Calu3 (cell line): ENCODE measurements at regions of chr11 and their contacts with region 1.

Region 1: GRCh38 chr11:14907411-14908213 is 15.6 kb upstream of the CYP2R1 start:
- DNase-seq: peak; percentile 82
- H3K4me3 Mint-ChIP-seq: peak overlapping the region; percentile 14
- H3K27ac Mint-ChIP-seq: peak overlapping the region; percentile 60
- H3K4me1 Mint-ChIP-seq: peaks cover 11% of the 10 kb centered on the region
- H3K27me3 Mint-ChIP-seq: no peaks in the 10 kb centered on the region
- CTCF ChIP-seq: peak; percentile 80

Region 2: GRCh38 chr11:14537134-14537599 is 370.4 kb before region 1 on chr11:
- CTCF ChIA-PET with region 1: interaction called, 3 read pairs
- intact Hi-C with region 1: loop called (anchors 5 kb)
- DNase-seq: peak; percentile 22
- H3K4me3 Mint-ChIP-seq: no peak overlapping the region
- H3K27ac Mint-ChIP-seq: no peak overlapping the region
- H3K4me1 Mint-ChIP-seq: no peaks in the 10 kb centered on the region
- H3K27me3 Mint-ChIP-seq: no peaks in the 10 kb centered on the region
- CTCF ChIP-seq: peak; percentile 72

Region 3: GRCh38 chr11:14789879-14790484 is 117.6 kb before region 1 on chr11:
- CTCF ChIA-PET with region 1: interaction called, 124 read pairs
- intact Hi-C with region 1: loop called (anchors 1 kb)
- DNase-seq: no peak
- H3K4me3 Mint-ChIP-seq: no peak overlapping the region
- H3K27ac Mint-ChIP-seq: no peak overlapping the region
- H3K4me1 Mint-ChIP-seq: no peaks in the 10 kb centered on the region
- H3K27me3 Mint-ChIP-seq: no peaks in the 10 kb centered on the region
- CTCF ChIP-seq: peak; percentile 37

Region 4: GRCh38 chr11:14974515-14975251 is 67.1 kb after region 1 on chr11:
- CTCF ChIA-PET with region 1: interaction called, 5 read pairs
- intact Hi-C with region 1: loop called (anchors 2 kb)
- DNase-seq: peak; percentile 68
- H3K4me3 Mint-ChIP-seq: peak overlapping the region; percentile 50
- H3K27ac Mint-ChIP-seq: no peak overlapping the region
- H3K4me1 Mint-ChIP-seq: peaks cover 10% of the 10 kb centered on the region
- H3K27me3 Mint-ChIP-seq: peaks cover 95% of the 10 kb centered on the region
- CTCF ChIP-seq: peak; percentile 63

Region 5: DNA sequence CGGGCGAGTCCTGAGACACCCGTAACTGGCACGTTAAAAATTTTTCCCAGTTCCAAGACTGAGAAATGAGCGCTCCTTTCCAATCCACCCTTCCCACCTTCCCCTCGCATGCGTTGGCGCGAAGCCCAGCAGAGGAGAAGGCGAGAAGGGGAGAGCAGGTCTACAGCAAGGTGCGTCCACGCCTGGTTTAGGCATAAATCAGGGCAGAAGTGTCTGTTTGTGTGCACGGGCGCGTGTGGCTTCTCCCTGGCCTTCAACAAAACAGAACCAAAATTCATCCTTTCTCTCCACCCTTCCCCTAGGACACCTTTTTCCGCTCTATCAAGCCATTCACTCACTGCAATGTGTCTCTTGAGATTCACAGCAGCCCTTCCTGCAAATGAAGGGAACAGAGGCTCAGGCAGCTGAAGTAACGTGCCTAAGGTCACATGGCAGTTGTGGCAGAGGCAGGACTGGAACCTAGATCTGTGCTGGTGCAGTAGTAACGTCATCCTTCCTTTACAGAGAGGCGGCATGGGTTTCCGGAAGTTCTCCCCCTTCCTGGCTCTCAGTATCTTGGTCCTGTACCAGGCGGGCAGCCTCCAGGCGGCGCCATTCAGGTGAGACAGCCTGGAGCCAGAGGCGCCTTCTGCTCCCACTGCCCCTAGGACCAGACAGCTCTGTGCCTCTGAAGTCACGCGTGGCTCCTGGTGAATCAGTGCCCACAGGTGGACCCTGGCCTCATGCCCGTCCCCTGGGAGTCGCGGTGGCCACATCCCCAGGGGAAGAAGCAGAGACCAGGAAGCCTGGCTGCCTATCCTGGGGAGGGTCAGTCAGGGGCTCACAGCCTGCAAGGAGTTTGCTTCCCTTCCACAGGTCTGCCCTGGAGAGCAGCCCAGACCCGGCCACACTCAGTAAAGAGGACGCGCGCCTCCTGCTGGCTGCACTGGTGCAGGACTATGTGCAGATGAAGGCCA is 166.9 kb after region 1 on chr11:
- CTCF ChIA-PET with region 1: interaction called, 84 read pairs
- intact Hi-C with region 1: loop called (anchors 1 kb)
- DNase-seq: peak; percentile 94
- H3K4me3 Mint-ChIP-seq: peak overlapping the region; percentile 78
- H3K27ac Mint-ChIP-seq: no peak overlapping the region
- H3K4me1 Mint-ChIP-seq: peaks cover 17% of the 10 kb centered on the region
- H3K27me3 Mint-ChIP-seq: peaks cover 70% of the 10 kb centered on the region
- CTCF ChIP-seq: peak; percentile 90

Region 6: GRCh38 chr11:15208378-15209222 is 301.0 kb after region 1 on chr11:
- CTCF ChIA-PET with region 1: interaction called, 7 read pairs
- intact Hi-C with region 1: loop called (anchors 2 kb)
- DNase-seq: peak; percentile 86
- H3K4me3 Mint-ChIP-seq: no peak overlapping the region
- H3K27ac Mint-ChIP-seq: no peak overlapping the region
- H3K4me1 Mint-ChIP-seq: peaks cover under 1% of the 10 kb centered on the region
- H3K27me3 Mint-ChIP-seq: peaks cover 47% of the 10 kb centered on the region
- CTCF ChIP-seq: peak; percentile 92